ENCODE measurements at regions of chr20 and their contacts with region 1.

Region 1: DNA sequence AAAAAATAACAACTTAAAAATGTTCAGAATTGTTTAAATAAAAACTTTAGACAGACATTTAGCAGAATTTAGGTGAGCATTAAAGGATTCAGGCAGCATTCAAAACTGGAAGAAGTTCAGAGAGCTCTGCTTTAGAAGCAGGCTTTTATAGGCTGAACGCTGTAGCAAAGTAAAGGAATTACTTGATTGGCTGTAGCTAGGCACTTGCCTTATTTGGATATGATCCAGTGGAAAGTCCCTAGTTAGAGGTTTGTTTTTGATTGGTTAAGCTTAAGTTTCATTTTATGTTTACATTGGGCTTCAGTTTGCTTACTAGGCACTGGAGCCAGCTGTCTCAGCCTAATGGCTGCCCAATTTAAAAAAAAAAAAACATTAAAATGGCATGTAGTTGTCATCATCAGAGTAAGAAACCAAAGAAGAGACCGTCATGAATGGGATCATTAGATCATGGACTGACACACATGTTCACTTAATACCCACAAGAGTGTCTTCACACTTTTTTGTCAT is 65.1 kb downstream of the CBFA2T2 start:
- DNase-seq: peak; percentile 90
- ATAC-seq: peak; percentile 96
- H3K4me3 ChIP-seq: peak overlapping the region in 2 of 5 experiments; percentile 24 to 40
- H3K4me3 Mint-ChIP-seq: peak overlapping the region; percentile 79
- H3K27ac ChIP-seq: peak overlapping the region; percentile 92 to 97
- H3K27ac Mint-ChIP-seq: peak overlapping the region; percentile 96
- H3K4me1 ChIP-seq: peaks cover 28 to 31% of the 10 kb centered on the region in 2 donors
- H3K4me1 Mint-ChIP-seq: peaks cover 34% of the 10 kb centered on the region
- H3K27me3 ChIP-seq: no peaks in the 10 kb centered on the region
- H3K27me3 Mint-ChIP-seq: no peaks in the 10 kb centered on the region
- CTCF ChIP-seq: no peak

Region 2: GRCh38 chr20:33475381-33476150 is 79.4 kb before region 1 on chr20:
- CTCF ChIA-PET with region 1: no interaction called
- POLR2A ChIA-PET with region 1: interaction called, 12 read pairs
- intact Hi-C with region 1: no loop called
- DNase-seq: no peak
- ATAC-seq: peak; percentile 14
- H3K4me3 ChIP-seq: no peak overlapping the region
- H3K4me3 Mint-ChIP-seq: peak overlapping the region; percentile 5
- H3K27ac ChIP-seq: no peak overlapping the region
- H3K27ac Mint-ChIP-seq: no peak overlapping the region
- H3K4me1 ChIP-seq: peaks cover 10% of the 10 kb centered on the region in 2 donors
- H3K4me1 Mint-ChIP-seq: peaks cover 12% of the 10 kb centered on the region
- H3K27me3 ChIP-seq: no peaks in the 10 kb centered on the region
- H3K27me3 Mint-ChIP-seq: no peaks in the 10 kb centered on the region
- CTCF ChIP-seq: no peak

Region 3: DNA sequence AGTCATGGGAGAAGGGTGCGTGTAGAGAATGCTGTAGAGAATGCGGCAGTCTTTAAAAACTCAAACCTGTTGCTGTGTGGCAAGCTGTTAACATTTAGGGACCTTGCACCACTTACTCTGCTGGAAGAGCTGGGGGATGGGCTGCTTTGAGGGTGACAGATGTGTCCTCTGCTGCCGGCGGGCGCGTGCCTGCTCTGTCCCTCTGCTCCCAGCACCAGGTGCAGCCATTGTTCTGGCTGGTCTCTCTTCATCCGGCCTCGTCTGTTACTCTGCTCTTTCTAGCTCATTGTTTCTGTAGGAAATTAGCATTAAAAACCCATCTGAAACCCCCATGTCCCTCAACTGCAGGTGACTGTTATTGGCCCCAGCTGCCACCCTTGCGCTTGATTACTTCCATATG is 13.4 kb after region 1 on chr20:
- CTCF ChIA-PET with region 1: interaction called, 3 read pairs
- POLR2A ChIA-PET with region 1: no interaction called
- intact Hi-C with region 1: loop called (anchors 2 kb)
- DNase-seq: peak; percentile 29
- ATAC-seq: peak; percentile 75
- H3K4me3 ChIP-seq: no peak overlapping the region
- H3K4me3 Mint-ChIP-seq: peak overlapping the region; percentile 42
- H3K27ac ChIP-seq: no peak overlapping the region
- H3K27ac Mint-ChIP-seq: no peak overlapping the region
- H3K4me1 ChIP-seq: peaks cover 19 to 20% of the 10 kb centered on the region in 2 donors
- H3K4me1 Mint-ChIP-seq: peaks cover 41% of the 10 kb centered on the region
- H3K27me3 ChIP-seq: no peaks in the 10 kb centered on the region
- H3K27me3 Mint-ChIP-seq: no peaks in the 10 kb centered on the region
- CTCF ChIP-seq: no peak

Region 4: GRCh38 chr20:33719989-33720709 is 165.2 kb after region 1 on chr20 and contains the start of gene PXMP4:
- CTCF ChIA-PET with region 1: no interaction called
- POLR2A ChIA-PET with region 1: no interaction called
- intact Hi-C with region 1: loop called (anchors 1 kb)
- DNase-seq: peak; percentile 93
- ATAC-seq: peak; percentile 97
- H3K4me3 ChIP-seq: peak within 1 kb of the TSS; percentile 36 to 90 (median 85)
- H3K4me3 Mint-ChIP-seq: peak within 1 kb of the TSS; percentile 90
- H3K27ac ChIP-seq: peak within 1 kb of the TSS; percentile 43 to 53
- H3K27ac Mint-ChIP-seq: peak within 1 kb of the TSS; percentile 85
- H3K4me1 ChIP-seq: peaks cover 8 to 16% of the 10 kb centered on the region in 2 donors
- H3K4me1 Mint-ChIP-seq: peaks cover 14% of the 10 kb centered on the region
- H3K27me3 ChIP-seq: no peaks in the 10 kb centered on the region
- H3K27me3 Mint-ChIP-seq: no peaks in the 10 kb centered on the region
- CTCF ChIP-seq: no peak
- total RNA-seq, gene PXMP4: 6.6 and 6.8 TPM in 2 replicates

Region 5: DNA sequence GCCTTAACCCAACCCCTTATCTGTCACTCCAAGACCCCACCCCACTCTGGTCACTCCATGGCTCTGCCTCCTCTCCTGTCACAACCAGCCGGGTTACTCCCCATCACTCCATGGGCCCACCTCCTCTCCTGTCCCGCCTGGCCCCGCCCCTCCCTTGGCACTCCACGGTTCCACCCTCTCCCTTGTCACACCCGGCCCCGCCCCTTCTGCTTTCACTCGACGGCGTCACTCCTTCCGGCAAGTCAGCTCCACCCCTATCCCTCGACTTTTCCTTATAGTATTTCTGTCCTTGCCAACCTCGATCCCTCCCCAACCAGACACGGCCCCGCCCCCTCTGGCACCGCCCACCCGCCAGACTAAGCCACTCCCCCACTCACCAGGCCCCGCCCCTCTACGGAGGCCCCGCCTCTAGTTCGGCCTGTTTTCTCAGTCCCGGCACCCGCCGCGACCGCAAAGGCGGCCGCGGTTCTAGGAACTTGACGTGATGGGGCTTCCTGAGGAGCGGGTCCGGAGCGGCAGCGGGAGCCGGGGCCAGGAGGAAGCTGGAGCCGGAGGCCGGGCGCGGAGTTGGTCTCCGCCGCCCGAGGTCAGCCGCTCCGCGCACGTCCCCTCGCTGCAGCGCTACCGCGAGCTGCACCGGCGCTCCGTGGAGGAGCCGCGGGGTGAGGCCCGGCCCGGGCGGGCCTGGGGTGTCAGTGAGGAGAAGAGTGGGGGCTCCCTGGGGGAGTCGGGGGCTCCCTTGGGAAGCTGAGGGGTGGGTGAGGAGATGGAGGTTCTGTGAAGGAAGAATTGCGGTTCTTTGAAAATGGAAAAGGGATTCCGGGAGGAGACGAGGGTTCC is 1321.4 kb after region 1 on chr20 and contains the start of gene ACSS2:
- CTCF ChIA-PET with region 1: no interaction called
- POLR2A ChIA-PET with region 1: no interaction called
- intact Hi-C with region 1: loop called (anchors 5 kb)
- DNase-seq: peak; percentile 94
- ATAC-seq: peak; percentile 87
- H3K4me3 ChIP-seq: peak within 1 kb of the TSS; percentile 54 to 80 (median 69)
- H3K4me3 Mint-ChIP-seq: peak within 1 kb of the TSS; percentile 92
- H3K27ac ChIP-seq: peak within 1 kb of the TSS in 1 of 2 donors; percentile 56
- H3K27ac Mint-ChIP-seq: peak within 1 kb of the TSS; percentile 81
- H3K4me1 ChIP-seq: peaks cover 35 to 41% of the 10 kb centered on the region in 2 donors
- H3K4me1 Mint-ChIP-seq: peaks cover 47% of the 10 kb centered on the region
- H3K27me3 ChIP-seq: no peaks in the 10 kb centered on the region
- H3K27me3 Mint-ChIP-seq: no peaks in the 10 kb centered on the region
- CTCF ChIP-seq: no peak
- total RNA-seq, gene ACSS2: 14.7 and 22.1 TPM in 2 replicates